H1 (cell line): ENCODE measurements at regions of chr5 and their contacts with region 1.

Region 1: DNA sequence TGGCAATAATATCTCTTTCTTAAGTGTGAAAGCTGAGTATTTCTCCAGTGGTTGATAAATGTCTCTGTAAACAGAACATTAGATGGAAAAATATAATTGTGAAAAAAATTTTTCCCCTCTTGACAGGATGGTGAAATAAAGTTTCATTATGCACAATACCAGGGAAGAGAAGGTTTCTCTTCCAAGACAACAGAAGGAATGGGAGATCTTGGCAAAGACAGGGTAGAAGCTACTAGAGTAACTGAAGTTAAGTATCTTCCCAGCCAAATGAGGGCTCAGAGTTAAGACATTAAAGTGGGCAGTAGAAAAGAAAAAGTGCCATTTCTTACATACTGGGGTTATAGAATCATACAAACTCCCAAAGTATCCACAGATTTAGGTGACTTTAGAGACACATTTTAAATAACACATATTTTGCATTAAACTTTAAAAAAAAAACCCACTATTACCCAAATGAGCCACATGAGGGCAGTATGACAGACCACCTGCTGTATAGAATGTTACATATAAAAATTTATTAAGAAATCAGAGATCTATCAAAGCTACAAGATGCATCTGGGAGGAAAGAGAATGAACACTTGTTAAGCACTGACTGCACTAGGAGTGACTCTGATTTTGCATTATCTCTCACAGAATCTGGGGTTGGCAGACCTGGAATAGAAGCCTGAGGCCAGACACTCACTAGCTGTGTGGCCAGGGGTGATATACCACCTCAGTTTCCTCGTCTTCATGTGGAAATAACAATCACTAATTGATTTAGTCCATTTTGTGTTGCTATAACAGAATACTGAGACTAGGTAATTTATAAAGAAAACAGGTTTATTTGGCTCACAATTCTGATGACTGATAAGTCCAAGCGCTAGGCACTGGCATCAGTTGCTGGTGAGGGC is 98.5 kb downstream of the ARSB start:
- DNase-seq: no peak
- H3K4me3 ChIP-seq: no peak overlapping the region
- H3K27ac ChIP-seq: no peak overlapping the region
- H3K4me1 ChIP-seq: peaks cover 0 to 7% (median 1%) of the 10 kb centered on the region in 4 experiments; a peak in 1 of 7 replicates
- H3K27me3 ChIP-seq: no peaks in the 10 kb centered on the region
- CTCF ChIP-seq: peak in 1 of 3 experiments; percentile 34; a peak in 2 of 4 replicates
- EP300 ChIP-seq: no peak
- POLR2A ChIP-seq: no peak
- RAD21 ChIP-seq: peak; percentile 18 to 24; a peak in 3 of 4 replicates

Region 2: GRCh38 chr5:78953092-78953800 is 66.7 kb after region 1 on chr5:
- CTCF ChIA-PET with region 1: no interaction called
- POLR2A ChIA-PET with region 1: no interaction called
- DNase-seq: no peak
- H3K4me3 ChIP-seq: no peak overlapping the region
- H3K27ac ChIP-seq: no peak overlapping the region
- H3K4me1 ChIP-seq: no peaks in the 10 kb centered on the region
- H3K27me3 ChIP-seq: no peaks in the 10 kb centered on the region
- CTCF ChIP-seq: no peak
- EP300 ChIP-seq: no peak
- POLR2A ChIP-seq: no peak
- RAD21 ChIP-seq: no peak

Region 3: DNA sequence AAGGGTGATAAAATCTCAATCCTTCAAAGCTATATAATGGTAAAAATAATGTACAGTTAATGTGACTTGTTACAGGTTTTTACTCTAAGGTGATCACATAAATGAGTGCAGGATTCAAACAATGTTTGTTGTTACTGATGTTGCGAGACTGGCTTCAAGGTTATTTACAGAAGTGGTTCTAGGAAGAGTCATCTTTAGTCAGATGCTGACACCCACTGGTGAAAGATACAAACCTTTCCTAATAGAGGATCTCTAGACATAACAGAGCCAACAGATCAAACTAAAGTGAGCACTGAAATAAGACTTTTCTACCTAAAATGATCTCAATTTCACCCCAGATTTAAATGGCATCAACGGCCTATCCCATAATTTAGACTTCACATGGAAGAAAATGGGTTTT is 78.3 kb after region 1 on chr5:
- CTCF ChIA-PET with region 1: interaction called, 19 read pairs
- POLR2A ChIA-PET with region 1: no interaction called
- DNase-seq: no peak
- H3K4me3 ChIP-seq: no peak overlapping the region
- H3K27ac ChIP-seq: no peak overlapping the region
- H3K4me1 ChIP-seq: no peaks in the 10 kb centered on the region
- H3K27me3 ChIP-seq: no peaks in the 10 kb centered on the region
- CTCF ChIP-seq: peak in 2 of 3 experiments; percentile 42 to 49; a peak in 2 of 4 replicates
- EP300 ChIP-seq: no peak
- POLR2A ChIP-seq: no peak
- RAD21 ChIP-seq: peak; percentile 83 to 84